ENCODE measurements at regions of chr17 and their contacts with region 1.

Region 1: GRCh38 chr17:1143573-1143972 is 36.2 kb downstream of the ABR start:
- DNase-seq: no peak
- H3K4me3 ChIP-seq: no peak overlapping the region
- H3K27ac ChIP-seq: no peak overlapping the region
- H3K4me1 ChIP-seq: peaks cover 6% of the 10 kb centered on the region
- H3K27me3 ChIP-seq: no peaks in the 10 kb centered on the region
- CTCF ChIP-seq: no peak
- EP300 ChIP-seq: no peak
- POLR2A ChIP-seq: no peak

Region 2: GRCh38 chr17:1179818-1180742 is 36.5 kb after region 1 on chr17 and contains the start of gene ABR:
- intact Hi-C with region 1: loop called in 1 of 4 experiments (anchors 5 kb)
- DNase-seq: peak; percentile 80 to 84 (median 83)
- H3K4me3 ChIP-seq: peak within 1 kb of the TSS; percentile 71
- H3K27ac ChIP-seq: peak within 1 kb of the TSS; percentile 78 to 82
- H3K4me1 ChIP-seq: peaks cover 3% of the 10 kb centered on the region
- H3K27me3 ChIP-seq: no peaks in the 10 kb centered on the region
- CTCF ChIP-seq: no peak
- EP300 ChIP-seq: no peak
- POLR2A ChIP-seq: peak; percentile 88
- total RNA-seq, gene ABR: 25.0 to 94.6 (median 60.2) TPM